ENCODE measurements at regions of chr9 and their contacts with region 1.

Region 1: DNA sequence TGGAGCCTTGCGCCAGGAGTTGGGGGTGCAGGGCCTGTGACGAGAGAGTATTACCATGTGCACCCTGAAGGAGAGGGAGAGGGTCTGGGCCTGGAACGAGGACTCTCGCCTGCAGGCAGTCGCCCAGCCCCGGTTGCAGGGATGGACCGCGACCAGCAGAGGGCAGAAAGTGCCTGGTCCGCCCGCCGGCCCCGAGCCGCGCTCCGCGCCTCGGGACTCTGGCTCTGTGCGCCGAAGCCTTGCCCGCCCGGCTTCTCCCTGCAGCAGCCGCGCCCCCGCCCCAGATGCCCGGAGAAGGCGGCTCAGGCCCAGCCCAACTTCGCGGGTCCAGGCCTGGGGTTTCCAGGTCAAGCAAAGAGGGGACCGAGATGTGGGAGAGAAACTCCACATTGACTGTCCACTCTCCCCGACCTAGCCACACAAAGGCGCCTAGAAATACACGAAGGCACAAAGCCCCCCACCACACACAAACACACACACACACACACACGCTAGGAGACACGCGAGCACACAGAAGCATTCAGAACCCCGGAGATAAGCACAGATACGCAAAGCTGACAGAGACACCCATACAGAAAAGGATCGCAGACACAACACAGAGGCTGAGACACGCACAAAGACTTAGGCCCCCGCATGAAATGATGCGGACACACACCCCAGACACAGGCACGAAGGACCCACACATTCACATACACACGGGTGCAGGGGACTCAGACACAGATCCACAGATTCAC is 2.0 kb upstream of the LMX1B start:
- DNase-seq: peak; percentile 66
- H3K4me3 ChIP-seq: peak overlapping the region; percentile 1 to 78 (median 63)
- H3K27ac ChIP-seq: no peak overlapping the region
- H3K4me1 ChIP-seq: peaks cover 29% of the 10 kb centered on the region
- H3K27me3 ChIP-seq: no peaks in the 10 kb centered on the region
- CTCF ChIP-seq: peak; percentile 77 to 87

Region 2: DNA sequence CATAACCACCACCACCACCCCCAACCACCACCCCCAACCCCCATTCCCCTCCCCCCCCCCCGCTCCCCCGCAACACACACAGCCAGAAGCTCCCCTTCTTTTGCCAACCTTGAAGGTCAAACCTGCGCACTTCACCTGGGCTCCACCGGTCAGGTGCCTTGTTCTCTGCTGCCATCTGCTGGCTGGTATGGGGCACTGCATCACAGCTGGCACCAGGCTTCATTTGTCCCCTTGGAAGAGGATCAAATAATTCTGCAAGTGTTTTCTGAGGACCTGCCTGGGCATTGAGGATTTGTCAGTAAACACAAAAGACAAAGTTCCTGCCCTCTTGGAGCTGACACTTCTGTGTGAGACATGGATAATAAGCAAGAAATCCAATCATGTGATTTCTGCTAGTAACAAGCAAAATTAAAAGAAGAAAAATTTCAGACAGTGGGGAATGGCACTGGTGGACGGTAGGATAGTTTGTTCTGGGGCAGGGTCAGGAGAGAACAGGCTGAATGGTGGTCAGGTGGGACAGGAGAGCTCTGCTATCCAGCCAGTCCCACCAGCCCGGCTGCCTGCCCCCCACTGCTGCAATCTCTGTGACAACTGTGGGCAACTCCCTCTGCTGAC is 53.6 kb before region 1 on chr9:
- CTCF ChIA-PET with region 1: no interaction called
- dilution Hi-C with region 1: no loop called
- in situ Hi-C with region 1: no loop called
- intact Hi-C with region 1: loop called (anchors 1 kb)
- DNase-seq: peak; percentile 30
- H3K4me3 ChIP-seq: no peak overlapping the region
- H3K27ac ChIP-seq: no peak overlapping the region
- H3K4me1 ChIP-seq: no peaks in the 10 kb centered on the region
- H3K27me3 ChIP-seq: no peaks in the 10 kb centered on the region
- CTCF ChIP-seq: peak; percentile 99

Region 3: GRCh38 chr9:126599047-126599650 is 12.6 kb before region 1 on chr9:
- CTCF ChIA-PET with region 1: no interaction called
- dilution Hi-C with region 1: no loop called
- in situ Hi-C with region 1: no loop called
- intact Hi-C with region 1: no loop called
- DNase-seq: no peak
- H3K4me3 ChIP-seq: no peak overlapping the region
- H3K27ac ChIP-seq: no peak overlapping the region
- H3K4me1 ChIP-seq: no peaks in the 10 kb centered on the region
- H3K27me3 ChIP-seq: no peaks in the 10 kb centered on the region
- CTCF ChIP-seq: peak in 1 of 2 donors; percentile 13

Region 4: GRCh38 chr9:126661521-126662220 is 49.9 kb after region 1 on chr9:
- CTCF ChIA-PET with region 1: no interaction called
- dilution Hi-C with region 1: no loop called
- in situ Hi-C with region 1: no loop called
- intact Hi-C with region 1: loop called (anchors 1 kb)
- DNase-seq: peak; percentile 87
- H3K4me3 ChIP-seq: no peak overlapping the region
- H3K27ac ChIP-seq: peak overlapping the region; percentile 5
- H3K4me1 ChIP-seq: peaks cover 45% of the 10 kb centered on the region
- H3K27me3 ChIP-seq: no peaks in the 10 kb centered on the region
- CTCF ChIP-seq: peak; percentile 6 to 47

Region 5: DNA sequence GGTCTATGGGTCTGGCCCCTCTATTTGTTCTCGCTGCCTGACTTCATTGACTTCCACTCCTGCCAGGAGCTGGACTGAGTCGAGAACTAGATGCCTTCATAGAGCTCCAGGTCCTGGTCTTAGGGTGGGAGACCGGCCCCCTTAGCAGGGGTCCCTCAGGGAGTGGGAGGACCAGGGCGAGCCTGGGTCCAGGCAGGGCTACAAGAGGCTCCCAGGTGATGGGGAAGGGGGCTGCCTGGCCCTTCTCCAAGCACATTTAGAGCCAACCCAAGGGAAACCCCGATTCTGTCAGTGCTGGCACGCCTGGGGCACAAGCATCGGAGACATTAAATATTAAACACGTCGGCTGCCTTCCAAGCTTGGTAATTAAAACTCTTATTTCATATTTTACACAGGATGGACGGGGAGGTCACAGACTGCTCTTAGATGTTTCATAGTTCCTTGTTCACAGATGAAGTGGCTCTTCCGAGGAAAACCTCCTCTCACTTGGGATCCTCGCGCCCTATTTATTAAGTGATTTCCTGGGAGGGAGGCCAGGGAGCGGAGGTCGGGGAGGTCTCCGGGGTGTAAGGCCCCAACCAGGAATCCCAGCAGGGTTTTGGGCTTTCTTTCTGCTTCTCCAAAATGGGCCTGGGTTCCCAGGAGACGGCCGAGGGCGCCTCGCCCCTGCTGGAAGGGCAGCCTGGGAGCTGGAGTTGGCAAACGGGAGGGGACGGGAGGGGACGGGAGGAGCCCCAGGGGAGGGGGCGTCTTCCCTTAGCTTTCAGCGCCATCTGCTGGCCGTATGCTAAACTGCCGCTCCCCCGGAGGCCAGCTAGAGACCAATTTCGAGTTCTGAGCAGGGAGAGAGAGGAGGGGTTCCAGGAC is 169.7 kb after region 1 on chr9:
- CTCF ChIA-PET with region 1: no interaction called
- dilution Hi-C with region 1: loop called (anchors 25 kb)
- in situ Hi-C with region 1: loop called (anchors 5 kb)
- intact Hi-C with region 1: loop called (anchors 2 kb)
- DNase-seq: peak; percentile 65
- H3K4me3 ChIP-seq: peak overlapping the region in 1 of 3 experiments; percentile 23
- H3K27ac ChIP-seq: no peak overlapping the region
- H3K4me1 ChIP-seq: no peaks in the 10 kb centered on the region
- H3K27me3 ChIP-seq: no peaks in the 10 kb centered on the region
- CTCF ChIP-seq: peak; percentile 69 to 91

Measured in mammary epithelial cell (primary cell).